Right ventricle myocardium superior (tissue), 1 donor: ENCODE measurements at regions of chr12 and their contacts with region 1.

Region 1: DNA sequence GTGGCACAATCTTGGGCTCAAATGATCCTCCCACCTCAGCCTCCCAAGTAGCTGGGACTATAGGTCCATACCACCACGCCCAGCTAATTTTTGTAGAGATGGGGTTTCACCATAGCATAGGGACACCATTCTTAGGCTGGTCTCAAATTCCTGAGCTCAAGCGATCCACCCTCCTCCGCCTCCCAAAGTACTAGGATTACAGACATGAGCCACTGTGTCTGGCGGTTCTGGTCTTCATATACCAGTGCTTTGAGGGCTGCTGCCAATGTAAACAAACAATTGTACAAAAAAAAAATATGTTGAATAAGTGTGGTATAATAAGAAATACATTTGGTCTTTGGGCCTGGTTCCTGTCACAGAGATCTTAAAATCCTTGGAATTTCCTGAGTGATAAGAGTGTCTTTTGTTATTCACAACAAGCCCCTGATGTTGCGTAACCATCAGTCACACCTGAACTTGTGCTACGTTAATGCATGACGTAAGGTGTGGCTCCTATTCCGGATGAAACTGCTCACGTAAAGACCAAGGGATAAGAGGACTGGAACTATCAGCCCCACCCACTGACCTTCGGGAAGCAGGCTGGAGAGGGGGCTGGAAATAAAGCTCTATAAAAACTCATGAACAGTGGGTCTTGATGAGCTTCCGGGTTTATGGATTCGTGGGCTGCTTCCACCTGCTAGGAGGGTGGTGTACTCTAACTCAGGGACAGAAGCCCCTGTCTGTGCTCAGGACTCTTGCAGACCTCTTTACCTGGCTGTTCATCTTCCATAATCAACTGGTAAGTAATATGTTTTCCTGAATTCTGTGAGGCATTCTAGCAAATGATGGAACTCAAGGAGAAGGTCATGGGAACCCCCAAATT is 16.5 kb upstream of the RIMKLB start:
- DNase-seq: no peak
- ATAC-seq: peak; percentile 22

Region 2: DNA sequence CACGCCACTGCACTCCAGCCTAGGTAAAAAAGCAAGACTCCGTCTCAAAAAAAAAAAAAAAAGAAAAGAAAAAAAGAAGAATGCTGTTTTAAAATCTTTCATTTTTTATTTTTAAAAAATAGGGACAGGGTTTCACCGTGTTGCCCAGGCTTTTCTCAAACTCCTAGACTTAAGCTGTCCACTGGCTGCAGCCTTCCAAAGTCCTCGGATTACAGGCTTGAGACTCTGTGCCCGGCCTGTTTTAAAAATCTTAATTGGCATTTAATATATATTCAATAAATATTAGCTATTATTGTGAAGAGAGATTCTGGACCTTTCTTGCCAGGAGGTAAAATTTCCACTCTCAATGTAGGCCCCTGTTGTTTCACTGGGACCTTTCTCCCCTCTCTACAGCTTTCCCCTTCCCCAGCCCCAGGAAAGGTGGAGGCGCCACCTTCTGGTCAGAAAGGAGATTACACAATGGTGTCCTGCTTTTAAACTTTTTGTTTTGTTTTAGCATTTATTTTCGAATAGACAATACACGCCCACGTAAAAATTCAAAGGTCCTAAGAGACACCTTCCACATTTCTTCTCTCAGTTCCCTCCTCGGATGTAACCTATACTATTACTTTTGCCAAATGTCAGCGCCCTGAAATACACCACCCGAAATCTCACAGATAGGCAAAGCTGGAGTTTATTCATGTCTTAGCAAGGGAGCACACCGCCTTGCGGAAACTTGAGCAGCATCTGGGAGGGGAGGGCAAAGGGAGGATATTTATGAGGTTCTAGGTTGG is 209.2 kb after region 1 on chr12:
- intact Hi-C with region 1: loop called (anchors 5 kb)
- DNase-seq: no peak
- ATAC-seq: peak; percentile 91

Region 3: GRCh38 chr12:9049520-9050133 is 368.4 kb after region 1 on chr12:
- intact Hi-C with region 1: loop called (anchors 5 kb)
- DNase-seq: no peak
- ATAC-seq: peak; percentile 70